ENCODE measurements at regions of chr14 and their contacts with region 1.

Region 1: DNA sequence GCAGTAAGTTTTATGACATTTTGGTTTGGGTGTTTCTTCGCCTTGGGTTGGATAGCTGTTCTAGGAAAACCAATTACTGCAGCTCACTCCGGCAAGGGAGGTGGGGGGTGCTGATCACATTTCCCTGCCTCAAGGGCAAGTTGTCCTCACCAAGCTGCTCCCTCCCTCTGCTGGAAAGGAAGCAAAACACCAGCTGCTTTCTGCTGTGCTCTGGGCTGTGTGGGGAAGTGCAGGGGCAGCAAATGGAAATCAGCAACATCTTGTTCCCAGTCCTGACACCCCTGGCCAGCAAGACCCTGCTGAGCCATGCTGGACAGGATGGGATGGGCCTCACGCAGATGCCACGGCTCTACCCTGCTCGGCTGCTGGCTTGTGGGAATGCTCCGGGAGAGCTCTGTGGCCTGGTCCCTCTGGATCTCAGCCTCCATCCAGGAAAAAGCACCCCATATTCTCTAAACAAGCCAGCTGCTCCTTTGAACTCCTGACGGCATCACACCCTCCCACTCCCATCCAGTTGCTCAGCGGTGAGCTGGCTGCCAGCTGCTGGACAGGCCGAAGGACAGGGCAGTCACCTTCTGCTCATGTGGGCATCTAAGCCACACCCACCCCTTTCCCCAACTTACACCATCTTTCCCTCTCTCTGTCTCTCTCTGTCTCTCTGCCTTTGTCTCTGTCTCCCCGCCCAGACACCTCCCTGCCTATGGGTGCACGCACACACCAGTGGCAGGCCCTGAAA is 52.4 kb upstream of the EIF5 start:
- DNase-seq: peak in 1 of 2 donors; percentile 31
- ATAC-seq: peak; percentile 79 to 86 (median 83)
- H3K4me3 ChIP-seq: no peak overlapping the region
- H3K27ac ChIP-seq: peak overlapping the region; percentile 28
- H3K4me1 ChIP-seq: peaks cover 18% of the 10 kb centered on the region
- H3K27me3 ChIP-seq: peaks cover 0 to 20% (median 0%) of the 10 kb centered on the region in 3 donors
- CTCF ChIP-seq: peak; percentile 29

Region 2: DNA sequence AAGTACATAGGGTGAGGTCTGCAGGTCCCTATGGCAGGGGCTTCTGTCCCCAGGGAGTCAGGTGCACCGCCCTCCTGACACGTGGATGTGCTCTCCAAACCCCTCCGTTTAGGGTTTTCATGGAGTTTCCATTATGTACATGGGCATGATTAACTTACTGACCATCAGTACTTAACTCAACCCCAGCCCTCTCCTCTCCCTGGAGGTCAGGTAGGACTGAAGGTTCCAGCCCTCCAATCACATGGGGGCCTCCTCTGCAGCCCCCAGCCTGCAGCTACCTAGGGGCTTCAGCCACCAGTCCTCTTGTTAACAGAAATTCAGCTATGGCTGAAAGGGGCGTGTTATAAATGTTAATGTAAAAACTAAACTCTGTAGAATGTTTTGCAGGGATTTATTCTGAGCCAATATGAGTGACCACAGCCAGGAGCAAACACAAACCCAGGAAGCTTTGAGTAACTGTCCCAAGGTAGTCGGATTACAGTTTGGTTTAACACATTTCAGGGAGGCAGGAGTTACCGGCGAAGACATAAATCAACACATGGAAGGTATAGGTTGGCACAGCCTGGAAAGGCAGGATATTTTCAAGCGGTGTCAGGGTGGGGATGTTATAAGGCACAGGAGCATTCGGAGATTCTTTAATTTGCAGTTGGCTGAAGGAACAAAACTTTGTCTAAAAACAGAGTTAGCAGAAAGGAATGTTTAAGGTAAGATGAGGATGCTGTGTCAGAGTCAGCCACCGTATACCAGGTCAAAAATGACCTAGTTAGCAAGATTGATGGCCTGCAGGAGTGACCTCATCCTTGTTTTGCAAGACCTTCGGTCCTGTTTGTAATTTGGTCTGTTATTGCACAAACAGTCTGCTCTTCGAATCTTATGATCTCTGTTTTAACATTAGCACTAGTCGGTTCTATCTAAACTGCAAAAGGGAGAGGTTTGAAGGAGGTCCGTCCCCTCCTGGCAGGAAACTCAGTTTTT is 83.2 kb before region 1 on chr14:
- intact Hi-C with region 1: loop called in 1 of 2 experiments (anchors 5 kb)
- DNase-seq: peak in 1 of 2 donors; percentile 38
- ATAC-seq: peak; percentile 93 to 95 (median 94)
- H3K4me3 ChIP-seq: no peak overlapping the region
- H3K27ac ChIP-seq: peak overlapping the region; percentile 74
- H3K4me1 ChIP-seq: peaks cover 19% of the 10 kb centered on the region
- H3K27me3 ChIP-seq: peaks cover 0 to 1% (median 0%) of the 10 kb centered on the region in 3 donors
- CTCF ChIP-seq: no peak